ENCODE measurements at regions of chr2 and their contacts with region 1.

Region 1: GRCh38 chr2:127591221-127591923 is 54.6 kb upstream of the GPR17 start:
- DNase-seq: peak; percentile 72
- ATAC-seq: peak; percentile 90
- H3K4me3 Mint-ChIP-seq: no peak overlapping the region
- H3K27ac Mint-ChIP-seq: no peak overlapping the region
- H3K4me1 Mint-ChIP-seq: no peaks in the 10 kb centered on the region
- H3K27me3 Mint-ChIP-seq: peaks cover 10% of the 10 kb centered on the region

Region 2: DNA sequence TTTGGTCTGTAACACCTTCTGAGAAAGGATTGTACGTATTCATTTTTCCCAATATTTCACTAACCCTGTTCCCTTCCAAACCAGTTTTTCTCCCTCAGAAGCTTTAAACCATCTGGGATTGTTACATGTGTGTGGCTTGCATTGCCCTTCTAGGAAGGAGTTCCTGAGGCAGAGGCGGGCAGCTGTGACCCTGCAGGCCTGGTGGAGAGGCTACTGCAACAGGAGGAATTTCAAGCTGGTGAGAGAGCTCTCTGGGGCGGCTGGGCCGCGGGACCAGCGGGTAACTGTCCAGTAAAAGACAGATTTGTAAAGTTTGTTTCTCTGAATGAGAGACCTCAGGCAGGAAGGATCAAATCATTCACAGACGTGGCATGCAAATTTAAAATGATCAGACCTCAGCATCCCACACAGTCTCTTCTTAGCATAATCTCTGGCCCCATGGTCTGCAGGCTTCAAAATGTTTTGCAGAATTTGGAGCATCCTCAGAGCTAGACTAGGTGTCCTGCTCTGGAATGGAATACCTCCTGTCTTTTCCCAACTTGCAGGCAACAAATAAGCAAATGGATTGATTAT is 14.4 kb after region 1 on chr2:
- CTCF ChIA-PET with region 1: interaction called, 13 read pairs
- DNase-seq: no peak
- ATAC-seq: no peak
- H3K4me3 Mint-ChIP-seq: no peak overlapping the region
- H3K27ac Mint-ChIP-seq: no peak overlapping the region
- H3K4me1 Mint-ChIP-seq: no peaks in the 10 kb centered on the region
- H3K27me3 Mint-ChIP-seq: peaks cover 19% of the 10 kb centered on the region

Region 3: GRCh38 chr2:127637725-127638252 is 46.4 kb after region 1 on chr2:
- CTCF ChIA-PET with region 1: interaction called, 33 read pairs
- DNase-seq: no peak
- ATAC-seq: no peak
- H3K4me3 Mint-ChIP-seq: no peak overlapping the region
- H3K27ac Mint-ChIP-seq: peak overlapping the region; percentile 59
- H3K4me1 Mint-ChIP-seq: peaks cover 21% of the 10 kb centered on the region
- H3K27me3 Mint-ChIP-seq: no peaks in the 10 kb centered on the region

Region 4: DNA sequence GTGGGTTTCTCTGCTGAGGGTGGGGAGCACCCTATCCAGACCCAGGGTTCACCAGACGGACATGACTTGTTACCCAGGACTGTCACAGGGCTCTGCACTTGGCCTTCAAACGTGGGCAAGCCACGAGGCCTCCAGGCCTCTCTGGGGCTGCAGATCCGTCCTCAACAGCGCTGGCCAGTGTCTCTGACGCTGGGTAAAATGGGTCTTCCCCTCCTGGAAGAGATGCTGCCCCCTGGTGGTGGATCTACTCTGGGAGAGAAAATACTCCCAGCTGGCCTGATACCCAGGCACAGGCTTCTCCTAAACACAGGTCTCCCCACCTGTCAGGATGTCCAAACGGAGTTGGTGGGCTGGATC is 58.3 kb after region 1 on chr2:
- CTCF ChIA-PET with region 1: interaction called, 63 read pairs
- DNase-seq: peak; percentile 87
- ATAC-seq: peak; percentile 86
- H3K4me3 Mint-ChIP-seq: no peak overlapping the region
- H3K27ac Mint-ChIP-seq: no peak overlapping the region
- H3K4me1 Mint-ChIP-seq: peaks cover 7% of the 10 kb centered on the region
- H3K27me3 Mint-ChIP-seq: no peaks in the 10 kb centered on the region

Measured in activated CD8-positive, alpha-beta memory T cell treated with anti-CD3 and anti-CD28 coated beads, Interleukin-2, amount 10 ng/mL, durations not matched to agents 7 days and 5 days (primary cell).